ENCODE measurements at regions of chr5 and their contacts with region 1.

Region 1: GRCh38 chr5:141968914-141969608 is at the start of gene RNF14:
- DNase-seq: peak; percentile 93
- H3K4me3 ChIP-seq: peak within 1 kb of the TSS; percentile 48 to 87 (median 67)
- H3K27ac ChIP-seq: peak within 1 kb of the TSS; percentile 77
- H3K4me1 ChIP-seq: peaks cover 16% of the 10 kb centered on the region
- H3K27me3 ChIP-seq: no peaks in the 10 kb centered on the region
- CTCF ChIP-seq: peak; percentile 72 to 88
- total RNA-seq, gene RNF14: 60.4 to 93.7 TPM

Region 2: GRCh38 chr5:141835928-141836670 is 133.0 kb before region 1 on chr5:
- CTCF ChIA-PET with region 1: no interaction called
- dilution Hi-C with region 1: loop called (anchors 10 kb)
- in situ Hi-C with region 1: no loop called
- intact Hi-C with region 1: no loop called
- DNase-seq: no peak
- H3K4me3 ChIP-seq: no peak overlapping the region
- H3K27ac ChIP-seq: no peak overlapping the region
- H3K4me1 ChIP-seq: peaks cover 8% of the 10 kb centered on the region
- H3K27me3 ChIP-seq: no peaks in the 10 kb centered on the region
- CTCF ChIP-seq: no peak

Region 3: GRCh38 chr5:141889282-141889871 is 79.7 kb before region 1 on chr5:
- CTCF ChIA-PET with region 1: interaction called, 10 read pairs
- dilution Hi-C with region 1: no loop called
- in situ Hi-C with region 1: no loop called
- intact Hi-C with region 1: no loop called
- DNase-seq: no peak
- H3K4me3 ChIP-seq: no peak overlapping the region
- H3K27ac ChIP-seq: no peak overlapping the region
- H3K4me1 ChIP-seq: no peaks in the 10 kb centered on the region
- H3K27me3 ChIP-seq: no peaks in the 10 kb centered on the region
- CTCF ChIP-seq: peak; percentile 33 to 69

Region 4: GRCh38 chr5:142000703-142001484 is 31.8 kb after region 1 on chr5:
- CTCF ChIA-PET with region 1: no interaction called
- dilution Hi-C with region 1: loop called (anchors 5 kb)
- in situ Hi-C with region 1: no loop called
- intact Hi-C with region 1: no loop called
- DNase-seq: no peak
- H3K4me3 ChIP-seq: no peak overlapping the region
- H3K27ac ChIP-seq: no peak overlapping the region
- H3K4me1 ChIP-seq: peaks cover 17% of the 10 kb centered on the region
- H3K27me3 ChIP-seq: no peaks in the 10 kb centered on the region
- CTCF ChIP-seq: peak; percentile 27 to 40

Region 5: DNA sequence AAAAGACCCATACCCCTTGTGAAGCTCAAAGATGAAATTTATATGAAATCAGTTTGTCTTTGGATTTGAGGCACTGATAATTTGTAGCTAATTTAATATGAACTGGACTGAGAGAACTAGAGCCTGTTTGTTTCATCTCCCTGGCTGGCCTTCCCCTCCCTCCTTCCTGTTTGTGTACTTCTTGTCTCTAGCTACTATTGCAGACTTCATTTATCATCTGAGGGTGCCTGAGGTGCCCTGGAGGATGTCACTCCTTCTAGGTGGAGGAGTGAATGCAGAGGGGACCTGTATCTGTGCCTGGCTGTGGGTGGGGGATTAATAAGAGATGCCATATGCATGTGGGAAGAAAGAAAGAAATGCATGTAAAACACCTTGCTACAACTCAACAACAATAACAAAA is 65.9 kb after region 1 on chr5:
- CTCF ChIA-PET with region 1: no interaction called
- dilution Hi-C with region 1: no loop called
- in situ Hi-C with region 1: no loop called
- intact Hi-C with region 1: no loop called
- DNase-seq: no peak
- H3K4me3 ChIP-seq: no peak overlapping the region
- H3K27ac ChIP-seq: no peak overlapping the region
- H3K4me1 ChIP-seq: no peaks in the 10 kb centered on the region
- H3K27me3 ChIP-seq: no peaks in the 10 kb centered on the region
- CTCF ChIP-seq: no peak